ENCODE measurements at regions of chr18 and their contacts with region 1.

Region 1: GRCh38 chr18:24959051-24959476 is 392.9 kb downstream of the ZNF521 start:
- DNase-seq: no peak
- ATAC-seq: no peak
- H3K4me3 Mint-ChIP-seq: no peak overlapping the region
- H3K27ac Mint-ChIP-seq: no peak overlapping the region
- H3K4me1 Mint-ChIP-seq: no peaks in the 10 kb centered on the region
- H3K27me3 Mint-ChIP-seq: no peaks in the 10 kb centered on the region

Region 2: DNA sequence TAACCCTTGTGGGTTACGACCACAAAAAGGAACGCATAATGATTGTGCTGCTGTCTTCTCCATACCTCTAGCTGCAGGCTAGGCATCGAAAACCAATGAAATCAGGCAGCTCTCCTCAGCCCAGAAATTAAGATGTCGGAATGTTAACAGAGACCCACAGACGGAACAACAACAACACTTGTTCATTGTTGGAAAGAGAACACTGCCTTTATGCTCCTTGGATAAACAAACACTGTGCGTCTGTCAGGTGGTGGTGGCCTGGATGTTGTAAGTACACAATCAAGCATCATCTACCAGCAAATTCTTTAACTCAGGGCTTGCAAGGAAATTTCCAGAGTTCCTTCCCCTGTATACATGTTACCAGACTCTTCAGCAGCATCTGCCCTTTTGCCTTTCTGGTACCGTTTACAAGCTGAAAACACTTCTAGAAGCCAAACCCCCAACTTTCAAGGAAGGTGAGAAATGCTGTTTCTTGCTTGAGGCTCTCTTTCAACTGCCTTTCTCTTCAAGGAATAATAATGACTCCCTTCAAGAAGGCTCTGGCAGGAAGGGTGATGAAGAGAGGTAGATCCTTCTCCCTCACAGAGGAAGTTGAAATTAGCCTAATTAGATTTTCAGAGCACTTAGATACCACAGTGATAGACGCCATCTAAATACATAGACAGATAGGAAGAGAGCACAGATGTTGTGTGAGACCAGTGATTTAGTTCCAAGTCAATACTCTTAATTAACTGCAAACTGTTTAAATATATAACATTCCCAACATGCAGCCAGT is 60.2 kb after region 1 on chr18:
- CTCF ChIA-PET with region 1: no interaction called
- POLR2A ChIA-PET with region 1: no interaction called
- intact Hi-C with region 1: loop called in 1 of 2 experiments (anchors 10 kb)
- DNase-seq: no peak
- ATAC-seq: no peak
- H3K4me3 Mint-ChIP-seq: no peak overlapping the region
- H3K27ac Mint-ChIP-seq: no peak overlapping the region
- H3K4me1 Mint-ChIP-seq: no peaks in the 10 kb centered on the region
- H3K27me3 Mint-ChIP-seq: peaks cover 2% of the 10 kb centered on the region

Region 3: DNA sequence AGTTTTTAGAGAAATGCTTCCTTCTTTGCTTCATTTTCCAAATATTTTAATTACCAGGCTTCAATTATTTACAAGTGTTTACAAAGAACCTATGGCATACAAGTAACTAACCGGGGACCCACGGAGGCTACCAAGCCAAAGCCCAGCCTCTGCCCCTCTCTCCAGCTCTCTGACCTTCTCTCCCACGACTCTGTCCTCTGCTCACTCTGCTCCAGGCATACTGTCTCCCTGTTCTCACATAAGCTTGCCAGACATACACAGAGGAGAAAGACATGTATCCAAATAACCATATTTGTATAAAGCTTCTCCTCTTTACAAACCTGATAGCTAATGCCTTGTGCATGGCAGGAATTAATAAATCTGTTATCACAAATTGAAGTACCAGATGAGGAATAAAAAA is 251.6 kb after region 1 on chr18:
- CTCF ChIA-PET with region 1: no interaction called
- POLR2A ChIA-PET with region 1: no interaction called
- intact Hi-C with region 1: no loop called
- DNase-seq: no peak
- ATAC-seq: no peak
- H3K4me3 Mint-ChIP-seq: no peak overlapping the region
- H3K27ac Mint-ChIP-seq: no peak overlapping the region
- H3K4me1 Mint-ChIP-seq: no peaks in the 10 kb centered on the region
- H3K27me3 Mint-ChIP-seq: no peaks in the 10 kb centered on the region

Measured in activated CD4-positive, alpha-beta T cell treated with anti-CD3 and anti-CD28 coated beads for 36 hours (primary cell).